Naive thymus-derived CD4-positive, alpha-beta T cell (primary cell): ENCODE measurements at regions of chr22 and their contacts with region 1.

Region 1: DNA sequence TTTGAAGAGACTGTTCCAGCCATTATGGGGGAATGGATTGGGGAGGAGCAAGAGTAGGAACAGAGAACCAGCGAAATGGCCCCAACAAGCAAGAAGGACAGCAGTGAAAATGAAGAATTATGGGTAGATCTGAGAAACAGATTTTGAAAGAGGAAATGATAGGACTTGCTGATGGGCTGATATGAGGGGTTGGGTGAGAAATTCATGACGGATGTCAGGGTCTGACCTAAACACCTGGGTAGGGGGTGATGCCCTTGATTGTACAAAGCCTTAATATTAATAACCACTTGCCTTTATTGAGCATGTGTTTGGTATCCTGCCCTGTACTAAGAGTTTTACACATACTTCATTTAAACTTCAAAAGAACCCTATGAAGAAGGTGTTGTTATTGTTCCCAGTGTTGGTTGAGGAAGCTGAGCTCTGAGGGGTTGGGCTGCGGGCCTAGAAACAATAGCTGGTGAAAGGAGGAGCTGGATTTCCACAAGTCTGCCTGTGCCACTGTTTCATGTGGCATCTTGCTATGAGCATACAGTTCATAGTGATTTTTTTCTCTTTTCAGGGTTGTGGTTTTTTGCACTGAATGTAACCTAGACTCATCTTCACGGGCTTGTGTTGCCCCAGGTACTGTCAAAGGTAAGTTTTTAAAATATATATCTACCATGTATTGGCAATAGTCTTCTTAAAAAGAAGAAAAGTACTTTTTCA is 61.1 kb upstream of the TNRC6B start:
- DNase-seq: peak in 8 of 9 donors; percentile 26 to 88 (median 84)
- ATAC-seq: peak; percentile 95
- H3K4me3 ChIP-seq: peak overlapping the region; percentile 6
- H3K4me3 Mint-ChIP-seq: peak overlapping the region; percentile 26 to 89 (median 78)
- H3K27ac ChIP-seq: peak overlapping the region; percentile 48
- H3K27ac Mint-ChIP-seq: peak overlapping the region; percentile 79 to 94 (median 87)
- H3K4me1 ChIP-seq: peaks cover 24 to 64% of the 10 kb centered on the region in 2 donors
- H3K4me1 Mint-ChIP-seq: peaks cover 31 to 95% (median 92%) of the 10 kb centered on the region in 7 donors
- H3K27me3 ChIP-seq: no peaks in the 10 kb centered on the region
- H3K27me3 Mint-ChIP-seq: no peaks in the 10 kb centered on the region

Region 2: DNA sequence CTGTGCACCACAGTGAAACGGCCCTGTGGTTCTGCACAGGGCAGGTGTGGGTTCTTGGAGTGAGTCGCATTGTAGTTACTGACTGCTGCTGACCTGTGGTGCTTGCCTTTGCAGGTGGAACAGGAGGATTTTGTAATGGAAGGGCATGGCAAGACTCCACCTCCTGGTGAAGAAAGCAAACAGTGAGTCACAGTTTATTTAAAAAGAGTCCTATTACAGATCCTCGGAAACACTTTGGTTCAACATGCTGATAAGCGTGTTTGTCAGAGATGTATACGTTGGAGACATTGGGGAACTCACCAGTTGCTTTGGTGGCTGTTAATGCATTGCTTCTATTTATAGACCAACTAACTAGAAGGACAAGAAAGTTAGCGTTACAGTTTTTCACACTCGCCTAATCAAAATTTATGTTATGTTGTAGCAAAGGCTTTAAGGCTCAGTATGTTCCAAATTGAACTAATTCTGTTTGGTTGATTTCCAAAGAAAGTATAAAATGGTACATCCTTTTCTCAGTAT is 39.4 kb after region 1 on chr22:
- CTCF ChIA-PET with region 1: interaction called, 3 read pairs
- POLR2A ChIA-PET with region 1: no interaction called
- intact Hi-C with region 1: loop called in 1 of 2 experiments (anchors 5 kb)
- DNase-seq: peak in 1 of 9 donors; percentile 15
- ATAC-seq: peak; percentile 32
- H3K4me3 ChIP-seq: no peak overlapping the region
- H3K4me3 Mint-ChIP-seq: no peak overlapping the region
- H3K27ac ChIP-seq: no peak overlapping the region
- H3K27ac Mint-ChIP-seq: peak overlapping the region in 6 of 9 donors; percentile 41 to 71 (median 50)
- H3K4me1 ChIP-seq: no peaks in the 10 kb centered on the region
- H3K4me1 Mint-ChIP-seq: peaks cover under 1 to 37% (median 21%) of the 10 kb centered on the region in 7 donors
- H3K27me3 ChIP-seq: no peaks in the 10 kb centered on the region
- H3K27me3 Mint-ChIP-seq: no peaks in the 10 kb centered on the region